Activated naive CD4-positive, alpha-beta T cell treated with anti-CD3 and anti-CD28 coated beads for 36 hours (primary cell): ENCODE measurements at regions of chr9 and their contacts with region 1.

Region 1: GRCh38 chr9:112037281-112038016 is 137.6 kb downstream of the SUSD1 start:
- DNase-seq: peak; percentile 79
- H3K4me3 Mint-ChIP-seq: no peak overlapping the region
- H3K27ac Mint-ChIP-seq: peak overlapping the region; percentile 76
- H3K4me1 Mint-ChIP-seq: peaks cover 45% of the 10 kb centered on the region
- H3K27me3 Mint-ChIP-seq: peaks cover 4% of the 10 kb centered on the region

Region 2: GRCh38 chr9:111805830-111806241 is 231.6 kb before region 1 on chr9:
- CTCF ChIA-PET with region 1: no interaction called
- intact Hi-C with region 1: loop called (anchors 1 kb)
- DNase-seq: no peak
- H3K4me3 Mint-ChIP-seq: no peak overlapping the region
- H3K27ac Mint-ChIP-seq: no peak overlapping the region
- H3K4me1 Mint-ChIP-seq: peaks cover 32% of the 10 kb centered on the region
- H3K27me3 Mint-ChIP-seq: no peaks in the 10 kb centered on the region

Region 3: GRCh38 chr9:111937781-111938426 is 99.5 kb before region 1 on chr9:
- CTCF ChIA-PET with region 1: interaction called, 3 read pairs
- intact Hi-C with region 1: loop called (anchors 1 kb)
- DNase-seq: peak; percentile 87
- H3K4me3 Mint-ChIP-seq: peak overlapping the region; percentile 32
- H3K27ac Mint-ChIP-seq: peak overlapping the region; percentile 86
- H3K4me1 Mint-ChIP-seq: peaks cover 23% of the 10 kb centered on the region
- H3K27me3 Mint-ChIP-seq: no peaks in the 10 kb centered on the region

Region 4: DNA sequence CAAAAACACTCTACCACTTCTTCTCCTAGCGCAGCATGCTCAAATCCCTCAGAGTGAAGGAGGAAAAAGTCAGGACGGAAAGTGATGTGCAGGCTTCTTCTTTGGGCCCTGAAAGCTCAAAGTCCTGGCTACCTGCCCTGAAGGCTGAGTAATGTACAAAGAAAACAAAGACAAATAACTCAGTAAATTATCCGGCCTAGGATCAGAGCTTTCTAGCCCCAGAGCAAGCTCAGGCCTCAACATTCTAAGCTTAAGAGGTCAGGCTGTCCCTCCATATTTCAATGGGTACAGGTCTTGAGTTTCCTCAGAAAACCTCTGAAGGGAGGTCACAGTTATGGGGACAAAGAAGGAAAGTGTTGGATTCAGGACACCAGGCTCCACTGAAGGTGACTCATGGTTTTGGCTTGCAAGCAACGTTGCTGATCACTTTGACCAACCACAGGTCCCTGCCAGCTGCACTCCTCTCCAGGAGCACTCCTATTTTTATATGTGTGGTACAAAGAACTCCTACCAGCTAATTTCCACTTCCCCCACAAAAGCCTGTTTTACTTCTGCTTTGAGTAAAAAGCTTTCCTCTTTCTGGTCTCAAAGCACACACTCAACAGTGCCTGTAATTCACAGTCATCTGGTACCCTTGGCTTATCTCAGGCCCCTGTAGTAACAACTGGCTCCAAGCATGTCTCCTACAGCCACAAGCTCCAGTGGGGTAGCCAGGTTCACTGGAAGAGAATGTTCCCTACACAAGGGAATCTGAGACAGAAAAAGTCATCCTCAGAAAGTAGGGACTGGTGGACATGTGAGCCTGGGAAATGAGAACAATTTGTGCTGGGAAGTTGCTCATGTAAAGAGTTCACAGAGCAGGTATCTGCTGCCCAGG is 25.2 kb before region 1 on chr9:
- CTCF ChIA-PET with region 1: no interaction called
- intact Hi-C with region 1: loop called (anchors 2 kb)
- DNase-seq: peak; percentile 33
- H3K4me3 Mint-ChIP-seq: no peak overlapping the region
- H3K27ac Mint-ChIP-seq: peak overlapping the region; percentile 12
- H3K4me1 Mint-ChIP-seq: peaks cover 26% of the 10 kb centered on the region
- H3K27me3 Mint-ChIP-seq: no peaks in the 10 kb centered on the region

Region 5: DNA sequence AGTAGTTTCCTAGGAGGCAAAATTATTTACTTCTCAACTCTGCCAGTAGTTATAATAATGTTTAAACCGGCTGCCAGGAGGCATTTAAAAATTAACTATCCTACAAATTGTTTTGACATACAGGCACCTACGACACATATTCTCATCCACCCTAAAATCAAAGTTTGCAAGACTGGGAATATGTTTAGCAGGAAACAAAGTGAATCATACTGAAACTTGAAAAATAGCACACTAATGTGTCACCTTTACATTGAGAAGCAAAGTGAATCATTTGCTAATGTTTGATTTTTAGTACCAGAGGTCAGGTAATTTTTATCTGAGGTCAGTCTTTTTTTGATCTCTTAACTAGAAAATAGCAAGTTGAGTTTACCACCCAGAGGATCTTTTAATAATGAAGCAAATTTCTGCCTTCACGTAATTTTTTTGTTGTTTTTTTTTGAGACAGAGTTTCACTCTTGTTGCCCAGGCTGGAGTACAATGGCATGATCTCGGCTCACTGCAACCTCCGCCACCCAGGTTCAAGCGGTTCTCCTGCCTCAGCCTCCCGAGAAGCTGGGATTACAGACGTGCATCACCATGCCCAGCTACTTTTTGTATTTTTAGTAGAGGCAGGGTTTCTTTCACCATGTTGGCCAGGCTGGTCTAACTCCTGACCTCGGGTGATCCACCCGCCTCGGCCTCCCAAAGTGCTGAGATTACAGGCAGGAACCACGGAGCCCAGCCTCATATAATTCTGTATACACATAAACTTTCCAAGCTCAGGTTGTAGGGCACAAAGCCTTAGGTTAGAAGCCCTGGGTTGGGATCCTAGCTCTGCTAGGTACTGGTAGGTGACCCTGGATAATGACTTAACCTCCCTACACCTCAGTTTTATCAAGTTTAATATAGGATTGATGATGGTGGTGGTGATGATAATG is 16.5 kb before region 1 on chr9:
- CTCF ChIA-PET with region 1: no interaction called
- intact Hi-C with region 1: loop called (anchors 1 kb)
- DNase-seq: no peak
- H3K4me3 Mint-ChIP-seq: no peak overlapping the region
- H3K27ac Mint-ChIP-seq: no peak overlapping the region
- H3K4me1 Mint-ChIP-seq: peaks cover 9% of the 10 kb centered on the region
- H3K27me3 Mint-ChIP-seq: no peaks in the 10 kb centered on the region

Region 6: GRCh38 chr9:112061152-112061740 is 23.8 kb after region 1 on chr9:
- CTCF ChIA-PET with region 1: no interaction called
- intact Hi-C with region 1: loop called (anchors 1 kb)
- DNase-seq: peak; percentile 64
- H3K4me3 Mint-ChIP-seq: no peak overlapping the region
- H3K27ac Mint-ChIP-seq: no peak overlapping the region
- H3K4me1 Mint-ChIP-seq: peaks cover 22% of the 10 kb centered on the region
- H3K27me3 Mint-ChIP-seq: no peaks in the 10 kb centered on the region

Region 7: GRCh38 chr9:113125386-113126035 is 1088.1 kb after region 1 on chr9:
- CTCF ChIA-PET with region 1: no interaction called
- intact Hi-C with region 1: no loop called
- DNase-seq: no peak
- H3K4me3 Mint-ChIP-seq: no peak overlapping the region
- H3K27ac Mint-ChIP-seq: no peak overlapping the region
- H3K4me1 Mint-ChIP-seq: no peaks in the 10 kb centered on the region
- H3K27me3 Mint-ChIP-seq: peaks cover 11% of the 10 kb centered on the region